Activated B cell treated with CpG ODN at 0.5 μM for 24 hours (primary cell): ENCODE measurements at regions of chr12 and their contacts with region 1.

Region 1: DNA sequence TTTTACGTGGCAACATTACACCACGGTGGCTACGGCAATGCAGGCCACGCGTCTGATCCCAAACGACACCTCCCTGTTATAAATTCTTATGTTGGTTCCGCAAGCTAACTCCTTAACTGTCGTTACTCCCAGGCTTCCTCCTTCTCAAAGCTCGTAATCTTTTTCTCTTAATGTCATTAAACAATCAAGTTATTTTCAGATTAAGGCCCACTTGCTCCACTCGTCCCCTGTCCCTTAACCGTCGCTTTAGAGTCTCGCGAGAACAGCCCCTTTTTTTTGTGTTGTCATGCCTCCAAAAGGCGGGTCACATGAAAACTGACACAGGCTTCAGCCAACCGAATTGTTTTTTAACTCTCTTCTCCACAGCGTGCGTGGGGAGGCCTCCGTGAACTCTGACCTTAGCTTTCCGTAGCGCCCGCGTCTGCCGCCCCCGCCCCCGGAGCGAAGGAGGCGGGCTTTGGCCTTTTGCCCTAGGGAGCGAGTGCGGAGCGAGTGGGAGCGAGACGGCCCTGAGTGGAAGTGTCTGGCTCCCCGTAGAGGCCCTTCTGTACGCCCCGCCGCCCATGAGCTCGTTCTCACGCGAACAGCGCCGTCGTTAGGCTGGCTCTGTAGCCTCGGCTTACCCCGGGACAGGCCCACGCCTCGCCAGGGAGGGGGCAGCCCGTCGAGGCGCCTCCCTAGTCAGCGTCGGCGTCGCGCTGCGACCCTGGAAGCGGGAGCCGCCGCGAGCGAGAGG is at the start of gene CAND1:
- DNase-seq: peak; percentile 95
- ATAC-seq: peak; percentile 79
- H3K4me3 Mint-ChIP-seq: peak within 1 kb of the TSS; percentile 92
- H3K27ac Mint-ChIP-seq: peak within 1 kb of the TSS; percentile 99
- H3K4me1 Mint-ChIP-seq: peaks cover 44% of the 10 kb centered on the region
- H3K27me3 Mint-ChIP-seq: no peaks in the 10 kb centered on the region
- CTCF ChIP-seq: no peak
- total RNA-seq, gene CAND1: 123 and 125 TPM in 2 replicates

Region 2: GRCh38 chr12:66169221-66170170 is 1099.6 kb before region 1 on chr12 and contains the start of gene TMBIM4:
- CTCF ChIA-PET with region 1: no interaction called
- POLR2A ChIA-PET with region 1: interaction called, 18 read pairs
- intact Hi-C with region 1: loop called (anchors 1 kb)
- DNase-seq: peak; percentile 84
- ATAC-seq: peak; percentile 85
- H3K4me3 Mint-ChIP-seq: peak within 1 kb of the TSS; percentile 98
- H3K27ac Mint-ChIP-seq: peak within 1 kb of the TSS; percentile 100
- H3K4me1 Mint-ChIP-seq: peaks cover 47% of the 10 kb centered on the region
- H3K27me3 Mint-ChIP-seq: no peaks in the 10 kb centered on the region
- CTCF ChIP-seq: no peak
- total RNA-seq, gene TMBIM4: 91.8 and 93.5 TPM in 2 replicates

Region 3: GRCh38 chr12:67161322-67161918 is 107.6 kb before region 1 on chr12:
- CTCF ChIA-PET with region 1: interaction called, 3 read pairs
- POLR2A ChIA-PET with region 1: interaction called, 3 read pairs
- intact Hi-C with region 1: loop called (anchors 1 kb)
- DNase-seq: no peak
- ATAC-seq: no peak
- H3K4me3 Mint-ChIP-seq: no peak overlapping the region
- H3K27ac Mint-ChIP-seq: no peak overlapping the region
- H3K4me1 Mint-ChIP-seq: no peaks in the 10 kb centered on the region
- H3K27me3 Mint-ChIP-seq: peaks cover 7% of the 10 kb centered on the region
- CTCF ChIP-seq: no peak

Region 4: DNA sequence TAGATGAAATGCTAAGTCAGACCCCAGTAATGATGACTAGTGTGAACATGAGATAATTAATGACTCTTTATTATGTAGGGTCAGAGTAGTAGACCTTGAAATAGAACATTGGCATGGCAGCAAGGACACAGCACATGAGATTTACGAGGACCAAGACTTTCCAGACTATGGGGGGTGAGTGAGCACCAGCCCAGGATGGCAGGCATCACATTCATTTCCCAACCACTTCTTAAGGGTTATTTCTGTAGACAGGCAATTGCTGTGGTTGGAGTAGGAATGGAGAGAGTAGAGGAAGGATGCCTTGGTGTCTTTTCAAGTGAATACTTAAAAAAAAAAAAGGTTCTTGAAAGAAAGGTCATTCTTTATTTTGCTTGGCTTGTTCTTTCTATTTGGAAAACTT is 190.1 kb after region 1 on chr12:
- CTCF ChIA-PET with region 1: no interaction called
- POLR2A ChIA-PET with region 1: no interaction called
- intact Hi-C with region 1: no loop called
- DNase-seq: no peak
- ATAC-seq: no peak
- H3K4me3 Mint-ChIP-seq: no peak overlapping the region
- H3K27ac Mint-ChIP-seq: no peak overlapping the region
- H3K4me1 Mint-ChIP-seq: no peaks in the 10 kb centered on the region
- H3K27me3 Mint-ChIP-seq: peaks cover 13% of the 10 kb centered on the region
- CTCF ChIP-seq: no peak

Region 5: DNA sequence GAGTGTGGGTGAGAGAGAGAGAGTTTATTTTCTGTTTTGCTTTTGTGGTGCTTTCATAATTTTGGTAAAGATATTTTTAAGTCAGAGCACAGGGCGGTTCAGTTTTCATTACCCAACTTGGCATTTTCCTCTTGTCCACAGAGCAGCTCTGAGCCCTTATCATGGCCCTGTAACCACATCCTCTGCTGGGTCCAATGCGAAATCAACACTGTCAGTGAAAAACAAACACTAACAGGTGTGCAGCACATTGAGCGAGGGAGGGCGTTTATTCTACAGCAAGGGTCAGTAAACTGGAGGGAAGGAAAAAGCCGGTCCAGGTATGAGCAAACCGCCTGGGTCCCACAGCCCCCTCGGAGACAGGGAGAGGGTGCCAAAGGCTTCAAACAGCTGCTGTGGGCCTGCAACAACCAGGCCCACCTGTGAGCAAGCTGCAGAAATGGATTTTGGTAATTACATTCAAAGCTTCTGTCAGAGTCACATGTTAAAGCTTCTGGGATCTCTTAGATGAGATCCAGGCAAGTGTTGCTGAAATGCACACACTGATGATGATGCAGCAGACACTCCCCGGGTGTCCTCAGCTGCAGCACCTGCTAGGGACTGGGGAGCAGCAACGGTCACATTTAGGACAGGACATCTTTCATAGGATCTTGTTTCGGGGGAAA is 246.7 kb after region 1 on chr12:
- CTCF ChIA-PET with region 1: no interaction called
- POLR2A ChIA-PET with region 1: no interaction called
- intact Hi-C with region 1: no loop called
- DNase-seq: no peak
- ATAC-seq: no peak
- H3K4me3 Mint-ChIP-seq: no peak overlapping the region
- H3K27ac Mint-ChIP-seq: peak overlapping the region; percentile 13
- H3K4me1 Mint-ChIP-seq: peaks cover 18% of the 10 kb centered on the region
- H3K27me3 Mint-ChIP-seq: peaks cover 9% of the 10 kb centered on the region
- CTCF ChIP-seq: no peak

Region 6: GRCh38 chr12:67630373-67631088 is 361.5 kb after region 1 on chr12:
- CTCF ChIA-PET with region 1: no interaction called
- POLR2A ChIA-PET with region 1: no interaction called
- intact Hi-C with region 1: loop called (anchors 5 kb)
- DNase-seq: peak; percentile 47
- ATAC-seq: peak; percentile 100
- H3K4me3 Mint-ChIP-seq: peak overlapping the region; percentile 61
- H3K27ac Mint-ChIP-seq: peak overlapping the region; percentile 87
- H3K4me1 Mint-ChIP-seq: peaks cover 64% of the 10 kb centered on the region
- H3K27me3 Mint-ChIP-seq: no peaks in the 10 kb centered on the region
- CTCF ChIP-seq: no peak

Region 7: GRCh38 chr12:67991158-67991557 is 722.1 kb after region 1 on chr12:
- CTCF ChIA-PET with region 1: no interaction called
- POLR2A ChIA-PET with region 1: interaction called, 19 read pairs
- intact Hi-C with region 1: loop called (anchors 2 kb)
- DNase-seq: peak; percentile 32
- ATAC-seq: peak; percentile 90
- H3K4me3 Mint-ChIP-seq: peak overlapping the region; percentile 74
- H3K27ac Mint-ChIP-seq: peak overlapping the region; percentile 94
- H3K4me1 Mint-ChIP-seq: peaks cover 69% of the 10 kb centered on the region
- H3K27me3 Mint-ChIP-seq: no peaks in the 10 kb centered on the region
- CTCF ChIP-seq: no peak

Region 8: GRCh38 chr12:68745904-68746571 is 1477.0 kb after region 1 on chr12 and contains the start of gene SLC35E3:
- CTCF ChIA-PET with region 1: no interaction called
- POLR2A ChIA-PET with region 1: interaction called, 6 read pairs
- intact Hi-C with region 1: loop called (anchors 5 kb)
- DNase-seq: peak; percentile 88
- ATAC-seq: peak; percentile 96
- H3K4me3 Mint-ChIP-seq: peak within 1 kb of the TSS; percentile 98
- H3K27ac Mint-ChIP-seq: peak within 1 kb of the TSS; percentile 95
- H3K4me1 Mint-ChIP-seq: peaks cover 50% of the 10 kb centered on the region
- H3K27me3 Mint-ChIP-seq: no peaks in the 10 kb centered on the region
- CTCF ChIP-seq: no peak
- total RNA-seq, gene SLC35E3: 7.8 and 9.5 TPM in 2 replicates